Transverse colon (tissue), 4 donors: ENCODE measurements at regions of chr9 and their contacts with region 1.

Region 1: GRCh38 chr9:95118596-95118995 is 198.9 kb downstream of the FANCC start:
- DNase-seq: no peak
- H3K4me3 ChIP-seq: no peak overlapping the region
- H3K27ac ChIP-seq: no peak overlapping the region
- H3K4me1 ChIP-seq: peaks cover 4 to 13% (median 9%) of the 10 kb centered on the region in 4 donors
- H3K27me3 ChIP-seq: no peaks in the 10 kb centered on the region
- CTCF ChIP-seq: no peak
- EP300 ChIP-seq: no peak
- POLR2A ChIP-seq: no peak

Region 2: GRCh38 chr9:95018099-95018936 is 100.3 kb before region 1 on chr9:
- in situ Hi-C with region 1: no loop called
- intact Hi-C with region 1: no loop called
- DNase-seq: no peak
- H3K4me3 ChIP-seq: no peak overlapping the region
- H3K27ac ChIP-seq: peak overlapping the region; percentile 66 to 97 (median 76)
- H3K4me1 ChIP-seq: peaks cover 15 to 68% (median 27%) of the 10 kb centered on the region in 4 donors
- H3K27me3 ChIP-seq: no peaks in the 10 kb centered on the region
- CTCF ChIP-seq: no peak
- EP300 ChIP-seq: no peak
- POLR2A ChIP-seq: no peak

Region 3: DNA sequence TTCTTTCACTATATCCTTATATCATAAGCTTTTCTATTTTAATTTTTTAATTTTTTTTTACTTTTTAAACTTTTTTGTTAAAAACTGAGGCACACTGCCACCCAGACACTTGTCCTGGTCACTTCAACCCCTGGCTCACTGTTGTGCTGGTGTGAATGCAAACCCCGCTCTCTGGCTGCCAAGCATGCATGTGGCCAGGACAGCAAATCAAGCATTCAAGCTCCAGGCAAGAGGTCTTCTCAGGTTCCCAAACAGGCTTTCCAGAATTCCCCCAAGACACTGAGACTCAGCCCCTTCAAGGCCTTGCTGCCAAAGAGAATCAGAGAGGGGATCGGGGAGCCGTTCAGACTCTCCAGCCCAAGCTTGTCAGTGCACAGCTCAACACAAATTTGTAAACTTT is 59.0 kb after region 1 on chr9:
- in situ Hi-C with region 1: no loop called
- intact Hi-C with region 1: loop called (anchors 2 kb)
- DNase-seq: no peak
- H3K4me3 ChIP-seq: no peak overlapping the region
- H3K27ac ChIP-seq: no peak overlapping the region
- H3K4me1 ChIP-seq: no peaks in the 10 kb centered on the region
- H3K27me3 ChIP-seq: no peaks in the 10 kb centered on the region
- CTCF ChIP-seq: no peak
- EP300 ChIP-seq: no peak
- POLR2A ChIP-seq: no peak

Region 4: DNA sequence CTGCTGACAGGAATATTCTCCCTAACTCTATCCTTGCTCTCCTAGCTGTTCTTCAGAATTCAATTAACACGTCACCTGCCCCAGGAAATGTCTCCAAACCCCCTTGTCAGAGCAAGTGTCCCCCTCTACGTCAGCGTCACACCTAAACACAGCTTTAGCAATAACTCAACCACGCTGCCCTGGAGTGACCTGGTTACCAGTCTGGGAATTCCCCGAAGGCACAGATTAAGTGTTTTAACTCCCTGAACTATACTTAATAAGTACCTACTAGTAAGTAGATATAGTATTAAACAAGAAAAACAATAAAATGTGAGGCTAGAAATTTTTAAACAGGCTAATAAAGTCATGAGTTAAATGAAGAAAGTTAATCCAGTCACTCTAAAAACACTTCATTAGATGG is 120.5 kb after region 1 on chr9:
- in situ Hi-C with region 1: no loop called
- intact Hi-C with region 1: no loop called
- DNase-seq: no peak
- H3K4me3 ChIP-seq: no peak overlapping the region
- H3K27ac ChIP-seq: no peak overlapping the region
- H3K4me1 ChIP-seq: no peaks in the 10 kb centered on the region
- H3K27me3 ChIP-seq: no peaks in the 10 kb centered on the region
- CTCF ChIP-seq: no peak
- EP300 ChIP-seq: no peak
- POLR2A ChIP-seq: no peak

Region 5: GRCh38 chr9:95447660-95448420 is 329.2 kb after region 1 on chr9:
- in situ Hi-C with region 1: no loop called
- intact Hi-C with region 1: no loop called
- DNase-seq: no peak
- H3K4me3 ChIP-seq: no peak overlapping the region
- H3K27ac ChIP-seq: peak overlapping the region in 3 of 4 donors; percentile 11 to 32 (median 26)
- H3K4me1 ChIP-seq: no peaks in the 10 kb centered on the region
- H3K27me3 ChIP-seq: no peaks in the 10 kb centered on the region
- CTCF ChIP-seq: no peak
- EP300 ChIP-seq: no peak
- POLR2A ChIP-seq: no peak